ENCODE measurements at regions of chr5 and their contacts with region 1.

Region 1: DNA sequence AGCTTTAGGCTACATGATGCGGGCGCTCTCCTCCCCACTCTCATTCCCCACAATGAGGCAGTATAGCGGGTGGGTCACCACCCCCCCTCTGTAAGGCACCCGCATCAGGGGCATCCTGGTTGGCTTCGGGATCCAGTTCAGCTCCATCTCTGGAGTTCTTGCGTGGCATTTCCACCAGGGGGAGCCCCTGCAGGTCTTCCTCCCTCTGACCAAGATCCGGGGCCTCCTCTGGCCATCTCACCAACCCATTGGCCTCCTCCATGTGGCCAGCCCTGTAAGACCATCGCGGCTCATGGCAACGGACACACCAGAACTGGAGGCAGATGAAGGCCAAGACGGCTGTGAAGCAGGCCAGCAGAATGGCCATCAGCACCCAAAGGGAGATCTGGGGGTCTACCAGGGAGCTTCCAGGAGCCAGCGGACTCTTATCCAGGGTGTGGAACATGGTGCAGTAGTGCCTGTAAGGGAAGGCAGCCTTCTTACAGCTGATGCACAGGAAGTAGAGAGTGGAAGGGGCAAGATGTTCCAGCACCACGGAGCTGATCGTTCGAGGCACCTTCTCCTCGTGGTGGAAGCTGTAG is 77.0 kb downstream of the CYFIP2 start:
- DNase-seq: peak in 12 of 35 experiments; percentile 8 to 41 (median 15)
- ATAC-seq: peak in 2 of 4 experiments; percentile 36 to 55
- H3K4me3 ChIP-seq: no peak overlapping the region
- H3K4me3 Mint-ChIP-seq: no peak overlapping the region
- H3K27ac ChIP-seq: no peak overlapping the region
- H3K27ac Mint-ChIP-seq: peak overlapping the region; percentile 11 to 34
- H3K4me1 ChIP-seq: peaks cover 0 to 11% of the 10 kb centered on the region in 2 experiments
- H3K4me1 Mint-ChIP-seq: peaks cover 28 to 36% (median 30%) of the 10 kb centered on the region in 3 donors
- H3K27me3 ChIP-seq: no peaks in the 10 kb centered on the region
- H3K27me3 Mint-ChIP-seq: no peaks in the 10 kb centered on the region

Region 2: GRCh38 chr5:156624686-156625085 is 718.2 kb before region 1 on chr5:
- CTCF ChIA-PET with region 1: interaction called in 1 of 2 experiments, 14 read pairs
- POLR2A ChIA-PET with region 1: no interaction called
- DNase-seq: no peak
- ATAC-seq: no peak
- H3K4me3 ChIP-seq: no peak overlapping the region
- H3K4me3 Mint-ChIP-seq: no peak overlapping the region
- H3K27ac ChIP-seq: no peak overlapping the region
- H3K27ac Mint-ChIP-seq: no peak overlapping the region
- H3K4me1 ChIP-seq: no peaks in the 10 kb centered on the region
- H3K4me1 Mint-ChIP-seq: peaks cover 0 to 10% (median 7%) of the 10 kb centered on the region in 3 donors
- H3K27me3 ChIP-seq: no peaks in the 10 kb centered on the region
- H3K27me3 Mint-ChIP-seq: peaks cover 9% of the 10 kb centered on the region in 2 donors

Region 3: GRCh38 chr5:158154226-158155005 is 811.5 kb after region 1 on chr5:
- CTCF ChIA-PET with region 1: interaction called in 1 of 2 experiments, 14 read pairs
- POLR2A ChIA-PET with region 1: no interaction called
- DNase-seq: no peak
- ATAC-seq: no peak
- H3K4me3 ChIP-seq: no peak overlapping the region
- H3K4me3 Mint-ChIP-seq: no peak overlapping the region
- H3K27ac ChIP-seq: no peak overlapping the region
- H3K27ac Mint-ChIP-seq: no peak overlapping the region
- H3K4me1 ChIP-seq: no peaks in the 10 kb centered on the region
- H3K4me1 Mint-ChIP-seq: no peaks in the 10 kb centered on the region
- H3K27me3 ChIP-seq: peaks cover 0 to 10% of the 10 kb centered on the region in 2 experiments
- H3K27me3 Mint-ChIP-seq: peaks cover 5 to 13% of the 10 kb centered on the region in 2 donors